CD4-positive, alpha-beta T cell (primary cell): ENCODE measurements at regions of chr19 and their contacts with region 1.

Region 1: GRCh38 chr19:41439441-41440222 is at the start of gene DMAC2:
- DNase-seq: peak; percentile 86 to 97 (median 93)
- ATAC-seq: peak; percentile 99
- H3K4me3 ChIP-seq: peak within 1 kb of the TSS; percentile 90
- H3K4me3 Mint-ChIP-seq: no peak within 1 kb of the TSS
- H3K27ac ChIP-seq: peak within 1 kb of the TSS; percentile 60 to 77
- H3K27ac Mint-ChIP-seq: no peak within 1 kb of the TSS
- H3K4me1 ChIP-seq: peaks cover 16% of the 10 kb centered on the region
- H3K4me1 Mint-ChIP-seq: no peaks in the 10 kb centered on the region
- H3K27me3 ChIP-seq: no peaks in the 10 kb centered on the region
- H3K27me3 Mint-ChIP-seq: peaks cover 13% of the 10 kb centered on the region
- CTCF ChIP-seq: peak; percentile 65
- total RNA-seq, gene DMAC2: 21.6 to 25.7 TPM

Region 2: DNA sequence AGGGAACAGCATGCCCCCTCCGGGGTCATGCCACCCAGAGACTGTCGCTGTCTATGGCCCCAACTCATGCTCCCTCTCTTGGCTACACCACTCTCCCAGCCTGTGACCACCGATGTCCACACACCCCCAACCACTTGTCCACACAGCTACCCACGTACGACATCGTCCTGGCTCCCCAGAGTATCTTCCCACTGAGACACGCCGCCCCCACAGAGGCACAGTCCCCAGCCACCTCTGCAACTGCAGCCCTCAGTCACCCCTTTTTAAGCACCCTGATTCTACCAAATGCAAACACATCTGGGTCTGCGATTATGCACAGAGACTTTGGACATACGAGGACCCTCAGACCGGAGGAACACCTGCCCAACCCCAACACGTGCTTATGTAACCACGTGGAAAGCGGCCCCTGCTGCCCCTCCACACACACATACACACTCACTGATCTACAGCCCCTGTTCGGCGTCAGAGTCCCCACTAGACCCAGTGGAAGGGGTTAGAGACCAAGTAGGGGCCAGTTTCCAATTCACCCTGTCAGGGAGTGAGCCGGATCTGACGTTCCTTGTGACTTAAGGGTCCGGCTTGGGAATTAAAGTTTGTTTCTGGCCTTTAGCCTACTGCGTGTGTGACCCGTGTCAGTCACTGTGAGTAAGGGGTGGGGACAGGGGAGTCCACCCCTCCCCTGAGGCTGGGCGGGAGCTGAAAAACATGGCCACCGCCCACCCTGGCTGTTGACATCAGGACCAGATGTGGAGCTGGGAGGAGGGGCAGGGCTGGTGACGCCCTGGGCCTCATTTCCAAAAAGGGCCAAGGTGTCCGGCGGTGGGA is 232.5 kb before region 1 on chr19:
- CTCF ChIA-PET with region 1: no interaction called
- POLR2A ChIA-PET with region 1: no interaction called
- intact Hi-C with region 1: loop called in 1 of 2 experiments (anchors 5 kb)
- DNase-seq: no peak
- ATAC-seq: no peak
- H3K4me3 ChIP-seq: no peak overlapping the region
- H3K4me3 Mint-ChIP-seq: no peak overlapping the region
- H3K27ac ChIP-seq: no peak overlapping the region
- H3K27ac Mint-ChIP-seq: peak overlapping the region; percentile 39
- H3K4me1 ChIP-seq: peaks cover 9% of the 10 kb centered on the region
- H3K4me1 Mint-ChIP-seq: no peaks in the 10 kb centered on the region
- H3K27me3 ChIP-seq: no peaks in the 10 kb centered on the region
- H3K27me3 Mint-ChIP-seq: no peaks in the 10 kb centered on the region
- CTCF ChIP-seq: no peak

Region 3: DNA sequence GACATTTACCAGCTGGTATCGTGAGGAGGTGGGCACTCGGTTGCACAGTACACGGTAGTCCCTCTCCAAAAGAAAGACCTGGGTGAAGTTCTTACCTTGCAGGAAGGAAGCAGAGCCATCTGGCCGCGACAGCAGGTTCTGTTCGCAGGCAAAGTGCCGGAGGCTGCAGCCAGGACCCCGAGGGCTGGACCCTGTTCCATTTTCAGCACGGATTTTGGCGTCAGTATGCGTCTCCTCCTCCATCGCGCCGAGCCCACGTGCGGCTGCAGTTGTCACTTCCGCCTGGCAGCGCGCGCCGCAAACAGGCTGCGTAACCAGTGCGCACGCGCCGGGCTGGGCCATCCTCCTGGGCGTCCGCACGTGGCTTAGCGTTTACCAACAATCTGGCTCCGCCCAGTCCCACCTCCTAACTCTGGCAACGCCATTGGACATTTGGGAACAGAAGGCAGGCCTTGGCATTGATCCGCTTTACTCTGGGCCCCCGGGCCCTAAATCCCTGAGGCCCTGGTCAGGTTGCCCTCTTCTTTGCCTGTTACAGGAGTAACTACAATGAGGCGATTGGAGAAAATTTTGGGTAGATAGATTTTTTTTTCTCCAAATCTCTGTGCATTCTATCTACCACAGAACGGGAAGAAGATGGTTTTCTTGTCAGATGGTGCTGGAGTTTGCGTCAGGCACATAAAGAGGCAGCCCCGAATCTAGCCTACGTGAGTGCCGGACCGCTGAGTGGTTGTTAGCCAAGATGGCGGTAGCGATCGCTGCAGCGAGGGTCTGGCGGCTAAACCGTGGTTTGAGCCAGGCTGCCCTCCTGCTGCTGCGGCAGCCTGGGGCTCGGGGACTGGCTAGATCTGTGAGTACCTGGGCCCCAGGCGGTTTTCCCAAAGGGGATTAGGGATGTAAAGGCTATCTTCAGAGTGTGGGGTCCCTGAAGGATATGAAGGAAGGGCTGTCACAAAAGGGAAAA is 42.3 kb before region 1 on chr19 and contains the starts of genes BCKDHA and EXOSC5:
- CTCF ChIA-PET with region 1: interaction called, 3 read pairs
- POLR2A ChIA-PET with region 1: no interaction called
- intact Hi-C with region 1: loop called in 1 of 2 experiments (anchors 1 kb)
- DNase-seq: peak; percentile 97 to 100 (median 99)
- ATAC-seq: peak; percentile 98
- H3K4me3 ChIP-seq: peak within 1 kb of the TSS; percentile 82
- H3K4me3 Mint-ChIP-seq: peak within 1 kb of the TSS; percentile 96
- H3K27ac ChIP-seq: peak within 1 kb of the TSS; percentile 91 to 99
- H3K27ac Mint-ChIP-seq: peak within 1 kb of the TSS; percentile 99
- H3K4me1 ChIP-seq: peaks cover 38% of the 10 kb centered on the region
- H3K4me1 Mint-ChIP-seq: peaks cover 57% of the 10 kb centered on the region
- H3K27me3 ChIP-seq: no peaks in the 10 kb centered on the region
- H3K27me3 Mint-ChIP-seq: no peaks in the 10 kb centered on the region
- CTCF ChIP-seq: no peak
- total RNA-seq, gene BCKDHA: 12.2 to 13.1 TPM
- total RNA-seq, gene EXOSC5: 6.5 to 7.5 TPM